ENCODE measurements at regions of chr17 and their contacts with region 1.

Region 1: GRCh38 chr17:38869526-38870258 is at the start of gene LASP1:
- DNase-seq: peak; percentile 72 to 95 (median 88)

Region 2: DNA sequence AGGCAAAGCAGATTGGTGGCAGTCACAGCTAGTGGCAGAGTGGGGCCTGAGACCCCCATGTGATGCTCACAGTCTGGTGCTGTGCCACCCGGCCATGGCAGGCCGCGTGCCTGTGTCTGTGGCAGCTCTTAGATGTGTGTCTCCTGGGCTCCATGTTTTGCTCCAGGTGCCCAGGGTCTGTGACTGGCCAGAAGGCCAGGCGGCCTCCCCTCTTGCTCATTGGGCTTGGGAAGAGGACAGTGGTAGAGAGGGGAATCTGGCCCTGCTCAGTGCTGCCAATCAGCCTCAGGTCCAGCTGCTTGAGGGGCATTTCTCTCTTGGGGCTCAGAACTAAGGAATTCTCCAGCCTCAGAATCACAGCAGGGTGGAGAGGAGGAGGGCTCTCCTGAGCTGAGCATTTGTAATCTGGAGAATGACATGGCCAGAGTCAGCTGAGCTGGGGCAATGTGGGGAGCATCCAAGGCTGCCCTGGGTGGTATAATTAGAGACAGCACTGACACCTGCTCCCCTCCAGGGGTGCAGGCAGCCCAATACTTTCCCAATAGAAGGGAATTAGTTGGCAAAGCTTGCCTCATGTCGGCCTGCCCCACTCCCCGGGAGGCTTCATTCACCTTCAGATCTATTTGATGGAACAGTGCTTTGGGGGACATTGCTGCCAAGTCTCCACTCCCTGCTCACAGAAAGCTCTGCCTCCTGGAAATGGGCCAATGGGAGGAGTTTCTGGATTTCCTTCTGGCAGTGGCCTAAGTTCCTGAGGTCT is 53.0 kb after region 1 on chr17:
- intact Hi-C with region 1: loop called (anchors 10 kb)
- DNase-seq: peak in 25 of 42 donors; percentile 12 to 75 (median 52)

Measured in head of caudate nucleus (tissue), 42 donors.